Transverse colon (tissue), 4 donors: ENCODE measurements at regions of chr22 and their contacts with region 1.

Region 1: GRCh38 chr22:20211997-20212753 is 55.9 kb downstream of the RTN4R start:
- DNase-seq: peak; percentile 57
- H3K4me3 ChIP-seq: no peak overlapping the region
- H3K27ac ChIP-seq: no peak overlapping the region
- H3K4me1 ChIP-seq: peaks cover 0 to 15% (median 8%) of the 10 kb centered on the region in 4 donors
- H3K27me3 ChIP-seq: no peaks in the 10 kb centered on the region
- CTCF ChIP-seq: no peak
- EP300 ChIP-seq: no peak
- POLR2A ChIP-seq: no peak

Region 2: DNA sequence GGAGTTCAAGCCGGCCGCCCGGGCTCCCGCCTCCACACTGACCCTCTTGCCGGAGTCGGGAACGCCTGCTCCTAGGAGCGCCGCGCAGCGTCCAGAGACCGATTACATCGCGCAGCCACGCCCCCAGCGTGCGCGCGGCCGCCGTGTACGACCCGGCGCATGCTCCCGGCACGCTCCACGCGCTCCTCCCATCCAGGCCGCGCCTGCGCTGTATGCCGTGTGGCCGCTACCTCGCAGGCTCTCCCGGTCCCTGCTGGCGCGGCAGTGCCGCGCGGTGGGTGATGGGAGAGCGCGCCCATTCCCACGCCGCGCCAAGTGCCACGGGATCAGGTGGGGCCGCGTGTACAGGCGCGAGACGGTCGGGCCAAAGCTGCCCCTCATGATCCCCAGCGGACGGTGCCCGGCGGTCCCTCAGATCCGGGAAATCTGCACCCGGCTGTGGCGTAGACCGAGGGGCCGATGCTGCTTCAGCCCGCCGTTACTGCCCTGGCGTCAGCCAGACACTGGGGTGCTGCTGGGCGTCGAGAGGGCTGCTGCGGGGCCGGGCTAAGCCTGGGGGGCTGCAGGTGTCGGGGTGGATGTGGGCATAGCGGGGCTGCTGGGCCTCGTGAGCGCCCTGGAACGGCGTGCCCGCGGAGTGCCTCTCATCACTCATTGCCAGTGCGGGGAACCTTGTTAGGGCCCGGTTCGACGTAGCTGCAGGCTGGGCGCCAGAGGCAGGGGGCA is 357.2 kb before region 1 on chr22 and contains the starts of genes GNB1L and RTL10:
- in situ Hi-C with region 1: no loop called
- intact Hi-C with region 1: loop called (anchors 10 kb)
- DNase-seq: peak; percentile 98
- H3K4me3 ChIP-seq: peak within 1 kb of the TSS; percentile 60 to 95 (median 90)
- H3K27ac ChIP-seq: peak within 1 kb of the TSS; percentile 90 to 97 (median 94)
- H3K4me1 ChIP-seq: peaks cover 16 to 25% (median 22%) of the 10 kb centered on the region in 4 donors
- H3K27me3 ChIP-seq: no peaks in the 10 kb centered on the region
- CTCF ChIP-seq: peak in 1 of 5 experiments; percentile 16
- EP300 ChIP-seq: no peak
- POLR2A ChIP-seq: peak; percentile 96
- total RNA-seq, gene GNB1L: 0.80 to 4.8 (median 2.8) TPM
- total RNA-seq, gene RTL10: 7.1 to 16.8 (median 7.8) TPM

Region 3: DNA sequence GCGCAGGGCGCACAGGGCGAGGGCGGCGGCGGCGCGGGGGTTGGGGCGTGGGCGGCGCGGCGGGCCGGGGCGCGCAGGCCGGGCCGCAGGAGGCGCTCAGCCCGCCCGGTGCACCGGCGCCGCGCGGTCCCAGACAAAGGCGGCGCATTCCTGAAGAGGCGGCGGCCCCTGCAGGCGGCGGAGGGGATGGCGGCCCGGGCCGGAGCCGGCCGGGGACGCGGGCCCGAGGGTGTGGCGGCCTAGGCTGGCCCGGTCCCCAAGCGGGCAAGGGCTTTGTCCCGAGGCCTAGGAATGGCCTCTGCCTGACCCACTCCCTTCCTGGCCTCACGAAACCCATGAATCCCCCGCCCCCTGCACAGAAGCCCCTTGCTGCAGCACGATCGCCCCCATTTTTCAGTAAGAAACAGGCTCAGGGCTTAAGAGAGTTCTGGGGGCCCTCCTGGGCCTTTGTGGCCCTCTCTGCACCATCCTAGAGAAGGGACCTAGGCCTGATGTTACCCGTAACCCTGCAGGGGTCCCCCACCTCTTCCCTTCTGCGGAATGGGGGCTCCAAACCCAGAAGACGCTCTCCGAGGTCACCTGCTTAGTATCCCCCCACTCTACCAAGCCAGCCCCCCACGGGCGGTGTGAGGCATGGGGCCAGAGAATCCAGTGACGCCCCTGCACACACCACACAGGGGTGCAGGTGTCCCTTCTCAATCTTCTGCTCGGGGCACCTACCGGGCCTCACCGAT is 56.3 kb after region 1 on chr22 and contains the start of gene RTN4R:
- in situ Hi-C with region 1: no loop called
- intact Hi-C with region 1: no loop called
- DNase-seq: peak; percentile 68
- H3K4me3 ChIP-seq: peak within 1 kb of the TSS in 3 of 4 donors; percentile 54 to 63 (median 57)
- H3K27ac ChIP-seq: peak within 1 kb of the TSS in 3 of 4 donors; percentile 55 to 69 (median 63)
- H3K4me1 ChIP-seq: peaks cover 0 to 14% (median 12%) of the 10 kb centered on the region in 4 donors
- H3K27me3 ChIP-seq: peaks cover 9% of the 10 kb centered on the region
- CTCF ChIP-seq: peak in 4 of 5 experiments; percentile 50 to 69 (median 56)
- EP300 ChIP-seq: no peak
- POLR2A ChIP-seq: no peak
- total RNA-seq, gene RTN4R: 0.64 to 22.8 (median 3.0) TPM in 3 of 4 donors, not detected in the other